Aorta (tissue), 5 donors: ENCODE measurements at regions of chr17 and their contacts with region 1.

Region 1: DNA sequence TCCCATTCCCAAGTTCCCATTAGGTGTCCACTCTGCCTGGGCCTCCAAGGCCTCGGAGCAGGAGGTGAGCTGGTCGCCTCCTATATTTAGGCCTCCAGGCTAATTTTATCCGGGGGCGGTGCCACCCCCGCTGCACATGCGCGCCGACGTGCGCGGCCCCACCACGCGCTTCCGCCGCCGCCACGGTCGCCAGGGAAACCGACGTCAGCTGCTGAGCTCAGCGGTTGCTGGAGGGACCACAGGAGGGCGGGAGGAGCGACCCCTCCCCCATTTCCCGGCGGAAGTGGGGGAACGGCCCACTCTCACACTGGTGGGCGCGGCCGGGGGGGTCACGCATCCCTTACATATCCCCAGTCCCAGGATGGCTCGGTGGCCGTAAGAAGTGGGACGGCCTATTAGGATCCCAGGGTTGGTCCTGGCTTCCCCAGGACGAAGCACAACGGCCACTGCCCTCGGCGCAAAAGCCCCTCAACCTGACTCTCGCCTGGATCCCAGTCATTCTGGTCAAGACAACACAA is 1.0 kb downstream of the PER1 start:
- DNase-seq: peak; percentile 96 to 98
- ATAC-seq: peak; percentile 66
- H3K4me3 ChIP-seq: peak overlapping the region; percentile 74 to 93
- H3K27ac ChIP-seq: peak overlapping the region; percentile 90 to 100
- H3K4me1 ChIP-seq: no peaks in the 10 kb centered on the region
- H3K27me3 ChIP-seq: no peaks in the 10 kb centered on the region

Region 2: GRCh38 chr17:7572588-7573323 is 578.4 kb before region 1 on chr17:
- intact Hi-C with region 1: loop called in 1 of 2 experiments (anchors 5 kb)
- DNase-seq: peak; percentile 85 to 99
- ATAC-seq: peak; percentile 97
- H3K4me3 ChIP-seq: peak overlapping the region; percentile 68 to 90
- H3K27ac ChIP-seq: peak overlapping the region; percentile 71 to 86
- H3K4me1 ChIP-seq: no peaks in the 10 kb centered on the region
- H3K27me3 ChIP-seq: no peaks in the 10 kb centered on the region

Region 3: GRCh38 chr17:8288336-8289102 is 137.3 kb after region 1 on chr17 and contains the start of gene RANGRF:
- intact Hi-C with region 1: no loop called
- DNase-seq: peak; percentile 94 to 95
- ATAC-seq: peak; percentile 92
- H3K4me3 ChIP-seq: peak within 1 kb of the TSS; percentile 43 to 44
- H3K27ac ChIP-seq: peak within 1 kb of the TSS in 1 of 2 donors; percentile 48
- H3K4me1 ChIP-seq: no peaks in the 10 kb centered on the region
- H3K27me3 ChIP-seq: no peaks in the 10 kb centered on the region
- total RNA-seq, gene RANGRF: 20.3 to 21.7 TPM